ENCODE measurements at regions of chr6 and their contacts with region 1.

Region 1: GRCh38 chr6:79869600-79870084 is 77.7 kb downstream of the ELOVL4 start:
- DNase-seq: peak; percentile 82
- H3K4me3 ChIP-seq: peak overlapping the region; percentile 22 to 31; a peak in 2 of 4 replicates
- H3K27ac ChIP-seq: no peak overlapping the region
- H3K4me1 ChIP-seq: peaks cover 0 to 14% of the 10 kb centered on the region in 2 experiments; a peak in 2 of 4 replicates
- H3K27me3 ChIP-seq: no peaks in the 10 kb centered on the region
- CTCF ChIP-seq: peak; percentile 82
- EP300 ChIP-seq: peak in 1 of 2 experiments; percentile 5; a peak in 1 of 4 replicates
- RAD21 ChIP-seq: peak; percentile 76

Region 2: DNA sequence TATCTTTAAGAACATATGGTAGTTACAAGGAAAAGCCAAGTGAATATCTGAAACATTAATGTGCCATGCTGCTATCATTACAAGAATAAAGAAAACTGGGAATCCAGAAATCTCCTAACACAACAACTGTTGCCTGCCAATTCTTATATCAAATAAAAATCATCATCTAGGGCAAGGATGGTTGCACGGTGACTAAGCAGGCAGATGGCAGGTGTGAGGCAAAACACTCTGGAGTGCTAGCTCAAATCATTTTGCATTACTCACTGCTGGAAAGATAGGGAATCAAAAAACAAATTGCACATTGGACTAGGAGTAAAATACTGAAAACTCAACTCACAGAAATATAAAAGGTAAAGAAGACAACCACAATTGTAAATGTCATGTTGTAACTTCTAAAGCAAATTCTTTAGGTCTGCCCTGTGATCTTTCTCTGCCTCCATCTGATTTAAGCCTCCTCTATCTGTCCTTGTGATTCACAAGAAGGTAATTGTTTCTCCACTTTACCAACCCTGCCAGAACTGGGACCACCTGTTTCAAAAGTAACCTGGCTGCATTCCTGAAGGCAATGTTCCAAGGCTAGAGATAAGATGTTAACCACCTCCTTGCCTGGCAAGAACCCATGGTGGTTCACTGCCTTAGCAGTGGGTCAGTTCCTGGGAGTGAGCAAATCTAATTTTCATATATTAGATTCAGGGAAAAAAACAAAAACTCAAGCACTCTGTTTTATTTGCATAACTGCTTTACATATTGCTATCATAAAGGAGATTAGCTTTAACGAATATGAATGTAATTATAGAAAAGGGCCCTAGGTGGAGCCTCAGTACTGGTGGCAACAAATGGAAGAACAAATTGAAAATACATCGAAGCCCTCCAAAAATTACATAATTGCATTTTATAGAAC is 299.3 kb before region 1 on chr6:
- CTCF ChIA-PET with region 1: interaction called, 40 read pairs
- POLR2A ChIA-PET with region 1: no interaction called
- DNase-seq: peak; percentile 54
- H3K4me3 ChIP-seq: peak overlapping the region in 1 of 2 experiments; percentile 27; a peak in 2 of 4 replicates
- H3K27ac ChIP-seq: peak overlapping the region in 1 of 2 experiments; percentile 43; a peak in 1 of 4 replicates
- H3K4me1 ChIP-seq: peaks cover 6 to 9% of the 10 kb centered on the region in 2 experiments; a peak in 3 of 4 replicates
- H3K27me3 ChIP-seq: no peaks in the 10 kb centered on the region
- CTCF ChIP-seq: peak; percentile 79
- EP300 ChIP-seq: no peak
- RAD21 ChIP-seq: peak; percentile 91

Region 3: GRCh38 chr6:79713701-79714322 is 155.8 kb before region 1 on chr6:
- CTCF ChIA-PET with region 1: interaction called, 28 read pairs
- POLR2A ChIA-PET with region 1: no interaction called
- DNase-seq: peak; percentile 53
- H3K4me3 ChIP-seq: no peak overlapping the region; a peak in 1 of 4 replicates
- H3K27ac ChIP-seq: no peak overlapping the region
- H3K4me1 ChIP-seq: peaks cover 0 to 5% of the 10 kb centered on the region in 2 experiments; a peak in 1 of 4 replicates
- H3K27me3 ChIP-seq: no peaks in the 10 kb centered on the region
- CTCF ChIP-seq: peak; percentile 78
- EP300 ChIP-seq: no peak
- RAD21 ChIP-seq: peak; percentile 90

Region 4: GRCh38 chr6:79782792-79783580 is 86.7 kb before region 1 on chr6:
- CTCF ChIA-PET with region 1: interaction called, 46 read pairs
- POLR2A ChIA-PET with region 1: no interaction called
- DNase-seq: no peak
- H3K4me3 ChIP-seq: no peak overlapping the region
- H3K27ac ChIP-seq: peak overlapping the region in 1 of 2 experiments; percentile 98; a peak in 2 of 4 replicates
- H3K4me1 ChIP-seq: peaks cover 0 to 34% of the 10 kb centered on the region in 2 experiments; a peak in 2 of 4 replicates
- H3K27me3 ChIP-seq: no peaks in the 10 kb centered on the region
- CTCF ChIP-seq: no peak
- EP300 ChIP-seq: no peak
- RAD21 ChIP-seq: no peak

Region 5: GRCh38 chr6:79841577-79842375 is 27.9 kb before region 1 on chr6:
- CTCF ChIA-PET with region 1: interaction called, 18 read pairs
- POLR2A ChIA-PET with region 1: no interaction called
- DNase-seq: no peak
- H3K4me3 ChIP-seq: no peak overlapping the region
- H3K27ac ChIP-seq: no peak overlapping the region
- H3K4me1 ChIP-seq: no peaks in the 10 kb centered on the region
- H3K27me3 ChIP-seq: no peaks in the 10 kb centered on the region
- CTCF ChIP-seq: no peak
- EP300 ChIP-seq: no peak
- RAD21 ChIP-seq: no peak

Region 6: GRCh38 chr6:79949233-79949632 is 79.6 kb after region 1 on chr6:
- CTCF ChIA-PET with region 1: interaction called, 10 read pairs
- POLR2A ChIA-PET with region 1: no interaction called
- DNase-seq: peak; percentile 49
- H3K4me3 ChIP-seq: peak overlapping the region in 1 of 2 experiments; percentile 9; a peak in 1 of 4 replicates
- H3K27ac ChIP-seq: no peak overlapping the region
- H3K4me1 ChIP-seq: peaks cover 4 to 17% of the 10 kb centered on the region in 2 experiments; a peak in 3 of 4 replicates
- H3K27me3 ChIP-seq: no peaks in the 10 kb centered on the region
- CTCF ChIP-seq: peak; percentile 84
- EP300 ChIP-seq: no peak
- RAD21 ChIP-seq: peak; percentile 79